ENCODE measurements at regions of chr1 and their contacts with region 1.

Region 1: DNA sequence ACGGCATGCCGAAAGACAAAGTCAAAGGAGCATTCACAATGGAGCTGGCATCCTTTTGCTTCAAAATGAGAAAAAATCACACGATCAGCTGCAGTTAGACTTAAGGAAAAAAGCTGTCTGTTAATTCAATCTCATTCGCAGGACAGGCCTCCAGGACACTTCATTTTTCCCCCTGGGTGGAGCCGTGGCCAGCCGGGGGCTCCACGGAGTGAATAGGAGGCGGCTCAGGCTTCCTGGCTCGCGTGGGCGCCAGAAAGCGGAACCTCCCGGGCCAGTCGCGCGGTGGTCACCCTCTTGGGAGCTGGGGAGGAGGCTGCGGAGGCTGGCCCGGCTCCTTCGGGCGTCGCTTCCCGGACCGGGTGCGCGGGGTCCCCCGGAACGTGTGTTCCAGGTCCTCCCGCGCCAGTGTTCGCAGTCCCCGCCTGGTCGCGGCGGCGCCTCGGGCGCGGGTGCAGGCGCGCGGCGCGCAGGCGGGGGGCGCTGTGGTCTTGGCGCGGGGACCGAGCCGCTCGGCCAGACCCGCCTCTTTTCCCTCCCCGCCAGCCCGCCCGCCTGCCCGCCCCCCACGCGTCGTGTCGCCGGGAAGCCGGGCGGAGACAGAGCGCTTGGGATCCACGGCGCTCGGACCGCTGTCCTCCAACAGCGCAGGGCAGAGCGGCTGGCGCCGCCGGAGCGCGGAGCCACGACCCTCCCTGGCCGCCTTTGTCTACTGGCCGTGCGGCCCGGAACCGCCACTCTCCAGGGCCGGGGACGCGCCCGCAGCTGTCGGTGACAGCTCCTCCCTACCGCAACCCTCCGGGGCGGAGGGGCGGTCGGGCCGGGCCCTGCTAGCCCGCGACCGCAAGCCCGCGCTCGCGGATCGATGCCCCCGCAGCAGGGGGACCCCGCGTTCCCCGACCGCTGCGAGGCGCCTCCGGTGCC is at the start of gene RHOU:
- DNase-seq: peak; percentile 47 to 90 (median 74)
- H3K4me3 ChIP-seq: peak within 1 kb of the TSS; percentile 55 to 98 (median 85)
- H3K27ac ChIP-seq: peak within 1 kb of the TSS; percentile 77 to 99 (median 95)
- H3K27me3 ChIP-seq: no peaks in the 10 kb centered on the region
- CTCF ChIP-seq: peak in 55 of 56 donors; percentile 1 to 99 (median 84)
- total RNA-seq, gene RHOU: 15.0 to 156 (median 44.0) TPM

Region 2: DNA sequence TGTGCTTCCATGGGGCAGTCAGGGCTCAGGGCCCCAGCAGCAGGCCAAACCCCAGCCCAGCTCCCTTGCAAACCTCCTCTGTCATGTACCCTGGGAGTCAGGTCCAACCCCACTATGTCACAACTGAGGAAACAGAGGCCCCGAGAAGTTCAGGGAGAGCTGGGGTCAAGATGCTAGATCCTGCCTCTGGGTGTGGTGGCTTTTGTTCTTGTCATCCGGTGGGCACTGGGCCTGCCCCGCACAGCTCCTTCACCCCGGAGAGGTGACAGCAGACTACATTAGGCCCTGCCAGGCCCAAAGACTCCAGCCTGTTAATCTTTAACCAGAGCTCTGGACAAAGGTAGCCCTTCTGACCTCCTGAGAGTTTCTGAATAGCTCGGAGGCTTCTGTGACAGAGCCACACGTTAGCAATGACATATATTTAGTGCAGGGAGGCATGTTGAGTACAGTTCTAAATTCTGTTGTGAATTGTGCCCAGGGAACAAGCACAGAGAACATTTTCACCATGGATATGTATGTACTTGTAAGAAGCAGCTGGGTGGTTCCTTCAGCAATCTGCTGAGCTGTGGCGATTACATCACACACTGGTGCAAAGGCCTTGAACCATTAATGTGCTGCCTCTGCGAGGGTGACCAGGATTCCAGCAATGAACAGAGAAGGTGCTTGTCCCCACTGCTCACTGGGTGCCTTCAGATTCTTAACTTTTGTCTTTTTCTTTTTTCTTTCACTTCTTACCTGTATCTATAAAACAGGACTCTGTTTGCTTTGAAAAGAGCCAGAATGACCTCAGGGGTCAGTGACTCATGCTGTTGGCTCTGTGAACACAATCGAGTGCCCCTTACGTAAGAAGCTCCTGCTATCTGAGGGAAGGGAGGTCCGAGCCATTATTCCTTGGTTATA is 102.9 kb after region 1 on chr1:
- intact Hi-C with region 1: loop called (anchors 5 kb)
- DNase-seq: no peak
- H3K4me3 ChIP-seq: no peak overlapping the region
- H3K27ac ChIP-seq: peak overlapping the region in 58 of 59 donors; percentile 3 to 99 (median 93)
- H3K27me3 ChIP-seq: peaks cover 0 to 9% (median 0%) of the 10 kb centered on the region in 45 donors
- CTCF ChIP-seq: no peak

Region 3: GRCh38 chr1:228849011-228849541 is 113.9 kb after region 1 on chr1:
- intact Hi-C with region 1: no loop called
- DNase-seq: no peak
- H3K4me3 ChIP-seq: no peak overlapping the region
- H3K27ac ChIP-seq: peak overlapping the region in 22 of 59 donors; percentile 5 to 75 (median 47)
- H3K27me3 ChIP-seq: no peaks in the 10 kb centered on the region
- CTCF ChIP-seq: no peak

Region 4: GRCh38 chr1:228955691-228956090 is 220.6 kb after region 1 on chr1:
- intact Hi-C with region 1: loop called in 1 of 2 experiments (anchors 5 kb)
- DNase-seq: no peak
- H3K4me3 ChIP-seq: no peak overlapping the region
- H3K27ac ChIP-seq: peak overlapping the region in 1 of 59 donors; percentile 25
- H3K27me3 ChIP-seq: no peaks in the 10 kb centered on the region
- CTCF ChIP-seq: no peak

Region 5: GRCh38 chr1:229156872-229157271 is 421.7 kb after region 1 on chr1:
- intact Hi-C with region 1: loop called in 1 of 2 experiments (anchors 5 kb)
- DNase-seq: no peak
- H3K4me3 ChIP-seq: no peak overlapping the region
- H3K27ac ChIP-seq: peak overlapping the region in 2 of 59 donors; percentile 13 to 36
- H3K27me3 ChIP-seq: no peaks in the 10 kb centered on the region
- CTCF ChIP-seq: peak in 49 of 56 donors; percentile 17 to 74 (median 43)

Measured in dorsolateral prefrontal cortex (tissue), 120 donors.